Stomach (tissue), 19 donors: ENCODE measurements at regions of chr22 and their contacts with region 1.

Region 1: DNA sequence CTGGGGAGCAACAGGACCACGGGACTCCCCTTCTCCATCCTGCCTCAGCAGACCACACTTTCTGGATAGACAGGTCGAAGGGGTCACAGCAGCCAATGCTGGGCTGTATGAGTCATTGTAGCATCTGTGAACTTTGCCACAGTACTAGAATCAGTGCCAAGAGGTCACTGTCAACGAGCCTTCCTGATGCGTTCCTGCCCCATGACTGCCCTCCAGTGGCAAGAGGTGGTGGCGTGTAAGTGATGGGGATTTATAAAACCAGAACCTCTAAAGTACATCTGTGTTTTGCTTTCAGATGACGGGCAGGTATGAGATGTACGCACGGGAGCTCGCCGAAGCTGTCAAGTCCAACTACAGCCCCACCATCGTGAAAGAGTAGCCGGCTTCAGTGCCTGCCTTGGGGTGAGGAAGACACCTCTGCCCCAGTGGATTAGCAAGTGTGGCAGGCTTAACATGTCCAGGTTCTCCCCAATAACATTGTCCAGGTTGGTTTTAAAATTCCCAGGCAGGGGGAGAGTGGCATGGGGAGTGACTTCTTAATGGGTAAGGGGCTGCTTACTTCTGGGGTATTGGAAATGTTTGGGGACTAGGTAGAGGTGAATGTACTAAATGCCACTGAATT is 29.4 kb downstream of the GUCD1 start:
- DNase-seq: peak; percentile 78 to 89
- H3K4me3 ChIP-seq: no peak overlapping the region
- H3K27ac ChIP-seq: no peak overlapping the region
- H3K4me1 ChIP-seq: peaks cover 13 to 39% (median 32%) of the 10 kb centered on the region in 4 donors
- H3K27me3 ChIP-seq: no peaks in the 10 kb centered on the region
- CTCF ChIP-seq: peak in 5 of 7 experiments; percentile 35 to 79 (median 74)
- EP300 ChIP-seq: no peak
- POLR2A ChIP-seq: no peak

Region 2: GRCh38 chr22:24325105-24325757 is 200.3 kb before region 1 on chr22:
- intact Hi-C with region 1: loop called (anchors 10 kb)
- DNase-seq: peak in 1 of 2 donors; percentile 85
- H3K4me3 ChIP-seq: no peak overlapping the region
- H3K27ac ChIP-seq: no peak overlapping the region
- H3K4me1 ChIP-seq: peaks cover 0 to 31% (median 13%) of the 10 kb centered on the region in 4 donors
- H3K27me3 ChIP-seq: no peaks in the 10 kb centered on the region
- CTCF ChIP-seq: peak in 5 of 7 experiments; percentile 27 to 43 (median 37)
- EP300 ChIP-seq: no peak
- POLR2A ChIP-seq: no peak

Region 3: GRCh38 chr22:24434471-24435322 is 90.8 kb before region 1 on chr22:
- intact Hi-C with region 1: loop called (anchors 5 kb)
- DNase-seq: peak; percentile 51 to 92
- H3K4me3 ChIP-seq: no peak overlapping the region
- H3K27ac ChIP-seq: peak overlapping the region; percentile 41 to 86 (median 61)
- H3K4me1 ChIP-seq: peaks cover 23 to 63% (median 60%) of the 10 kb centered on the region in 4 donors
- H3K27me3 ChIP-seq: no peaks in the 10 kb centered on the region
- CTCF ChIP-seq: no peak
- EP300 ChIP-seq: no peak
- POLR2A ChIP-seq: no peak